Dorsolateral prefrontal cortex (tissue), 120 donors: ENCODE measurements at regions of chr1 and their contacts with region 1.

Region 1: DNA sequence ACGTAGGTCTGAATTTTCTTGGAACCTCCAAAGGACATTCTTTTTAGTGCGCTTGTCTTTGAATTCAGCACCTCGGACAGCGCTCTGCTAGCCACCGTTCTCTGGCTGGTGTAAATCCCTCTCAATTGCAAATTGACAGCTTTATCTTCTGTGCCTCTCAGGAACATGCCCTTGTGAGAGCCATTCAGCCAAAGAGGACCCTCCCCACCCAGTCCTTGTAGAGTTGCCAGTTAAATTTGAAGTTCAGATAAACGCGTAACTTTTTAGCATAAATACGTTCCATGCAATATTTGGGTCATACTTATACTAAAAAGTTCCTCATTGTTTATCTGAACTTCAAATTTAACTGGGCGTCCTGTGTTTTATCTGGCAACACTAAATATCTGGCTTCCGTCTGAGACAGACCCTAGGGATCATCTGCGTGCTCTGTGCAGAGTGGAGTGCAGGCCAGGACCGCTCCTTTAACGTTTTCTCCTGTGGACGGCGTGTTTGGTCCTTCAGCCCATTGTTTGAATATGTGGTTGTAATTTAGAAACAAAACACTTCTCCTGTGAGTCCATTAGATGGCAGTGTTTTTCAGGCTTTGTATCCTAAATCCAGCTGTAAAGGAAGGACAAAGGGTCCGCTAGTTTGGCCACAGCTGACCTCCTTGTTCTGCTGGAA is 7.0 kb downstream of the KCNAB2 start:
- DNase-seq: peak in 1 of 10 donors; percentile 61
- H3K4me3 ChIP-seq: no peak overlapping the region
- H3K27ac ChIP-seq: peak overlapping the region in 2 of 59 donors; percentile 2 to 40
- H3K27me3 ChIP-seq: no peaks in the 10 kb centered on the region
- CTCF ChIP-seq: peak in 55 of 56 donors; percentile 22 to 72 (median 56)

Region 2: DNA sequence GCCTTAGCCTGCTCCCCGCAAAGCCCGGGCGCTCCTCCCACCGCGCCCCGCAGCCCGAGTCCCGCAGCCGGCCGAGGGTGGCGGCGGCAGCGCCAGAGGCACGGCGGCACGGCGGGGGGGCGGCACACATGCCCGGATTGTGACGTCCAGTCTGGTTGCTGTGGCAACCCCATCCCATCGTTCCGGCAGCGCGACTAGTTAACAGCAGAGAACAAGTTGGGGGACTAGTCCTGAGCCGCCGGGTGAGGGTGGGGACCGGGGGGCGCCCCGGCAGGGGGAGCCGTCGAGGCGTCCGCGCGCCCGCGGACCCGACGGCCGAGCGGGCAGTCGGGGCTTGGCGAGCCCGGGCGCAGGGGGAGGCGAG is 127.5 kb after region 1 on chr1 and contains the start of gene CHD5:
- intact Hi-C with region 1: loop called (anchors 5 to 10 kb)
- DNase-seq: peak in 4 of 10 donors; percentile 62 to 72 (median 65)
- H3K4me3 ChIP-seq: peak within 1 kb of the TSS; percentile 18 to 72 (median 58)
- H3K27ac ChIP-seq: peak within 1 kb of the TSS in 42 of 59 donors; percentile 10 to 88 (median 60)
- H3K27me3 ChIP-seq: peaks cover 0 to 57% (median 26%) of the 10 kb centered on the region in 45 donors
- CTCF ChIP-seq: no peak
- total RNA-seq, gene CHD5: 40.0 to 225 (median 141) TPM

Region 3: DNA sequence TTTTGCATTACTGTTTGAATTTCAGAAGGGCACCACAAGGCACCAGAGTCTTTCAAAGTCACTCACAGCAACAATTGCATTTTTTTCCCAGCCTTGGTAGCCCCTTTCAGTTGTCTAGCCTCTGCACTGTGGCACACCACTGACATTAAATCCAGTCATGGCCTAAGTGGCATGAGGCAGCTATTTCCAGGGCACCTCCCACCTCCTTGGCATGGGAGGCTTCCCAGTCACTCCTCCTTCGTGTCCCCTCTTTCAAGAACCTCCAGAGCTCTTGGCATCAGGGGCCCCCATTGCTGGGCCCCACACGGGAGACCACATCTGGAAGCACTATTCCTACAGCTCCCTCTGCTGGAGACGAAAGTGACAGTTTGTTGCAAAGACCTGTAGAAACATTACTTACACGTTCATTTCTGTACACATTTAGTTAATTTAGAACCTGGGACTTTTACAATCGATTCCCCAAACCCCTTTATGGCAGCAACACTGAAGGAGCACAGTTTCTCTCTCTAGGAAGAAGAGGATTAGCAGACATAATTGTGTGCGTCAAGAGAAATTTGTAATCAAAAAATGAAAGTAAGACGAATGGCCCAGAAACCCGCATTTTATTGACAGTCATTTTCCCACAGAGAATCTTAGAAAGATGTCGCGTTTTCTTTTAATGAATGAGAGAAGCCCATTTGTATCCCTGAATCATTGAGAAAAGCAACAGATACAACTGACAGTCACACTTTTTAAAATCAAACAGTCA is 133.1 kb after region 1 on chr1:
- intact Hi-C with region 1: loop called (anchors 5 to 10 kb)
- DNase-seq: peak in 1 of 10 donors; percentile 57
- H3K4me3 ChIP-seq: no peak overlapping the region
- H3K27ac ChIP-seq: no peak overlapping the region
- H3K27me3 ChIP-seq: peaks cover 0 to 4% (median 0%) of the 10 kb centered on the region in 45 donors
- CTCF ChIP-seq: peak; percentile 24 to 65 (median 49)